Dendritic cell treated with granulocyte-macrophage colony-stimulating factor and Interleukin-4, amounts not matched to agents 40 ng/mL and 50 ng/mL, for 4 days (primary cell): ENCODE measurements at regions of chr2 and their contacts with region 1.

Region 1: DNA sequence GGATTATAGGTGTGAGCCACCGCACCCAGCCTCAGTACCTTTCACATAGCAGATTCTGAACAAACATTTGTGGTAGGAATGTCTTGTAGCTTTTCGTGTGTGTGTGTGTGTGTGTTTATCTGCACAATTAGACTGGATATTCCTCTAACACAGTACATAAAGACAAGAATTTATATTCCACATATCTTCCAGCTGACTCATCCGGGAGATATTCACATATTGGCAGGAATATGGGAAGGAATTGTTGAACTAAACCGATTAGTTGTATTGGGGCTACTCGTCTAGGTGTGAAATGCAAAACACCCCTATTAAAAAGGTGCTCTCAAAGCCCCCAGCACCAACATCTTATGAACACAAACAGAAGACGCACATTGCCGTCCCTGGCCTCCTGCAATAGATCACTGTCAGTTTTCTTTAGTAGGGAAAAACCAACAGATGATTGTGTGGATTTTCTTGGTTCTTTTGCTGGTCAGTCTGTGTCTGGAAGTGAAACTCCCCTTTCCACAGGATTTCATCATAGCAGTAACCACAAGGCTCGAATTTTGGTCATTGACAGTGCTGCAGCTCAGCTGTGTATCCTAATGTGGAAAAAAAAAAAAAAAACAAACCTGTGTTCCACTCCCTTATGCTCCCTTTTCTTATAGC is 208.5 kb upstream of the ACVR2A start:
- H3K4me3 Mint-ChIP-seq: peak overlapping the region; percentile 14
- H3K27ac Mint-ChIP-seq: peak overlapping the region; percentile 71
- H3K4me1 Mint-ChIP-seq: peaks cover 14% of the 10 kb centered on the region
- H3K27me3 Mint-ChIP-seq: no peaks in the 10 kb centered on the region

Region 2: DNA sequence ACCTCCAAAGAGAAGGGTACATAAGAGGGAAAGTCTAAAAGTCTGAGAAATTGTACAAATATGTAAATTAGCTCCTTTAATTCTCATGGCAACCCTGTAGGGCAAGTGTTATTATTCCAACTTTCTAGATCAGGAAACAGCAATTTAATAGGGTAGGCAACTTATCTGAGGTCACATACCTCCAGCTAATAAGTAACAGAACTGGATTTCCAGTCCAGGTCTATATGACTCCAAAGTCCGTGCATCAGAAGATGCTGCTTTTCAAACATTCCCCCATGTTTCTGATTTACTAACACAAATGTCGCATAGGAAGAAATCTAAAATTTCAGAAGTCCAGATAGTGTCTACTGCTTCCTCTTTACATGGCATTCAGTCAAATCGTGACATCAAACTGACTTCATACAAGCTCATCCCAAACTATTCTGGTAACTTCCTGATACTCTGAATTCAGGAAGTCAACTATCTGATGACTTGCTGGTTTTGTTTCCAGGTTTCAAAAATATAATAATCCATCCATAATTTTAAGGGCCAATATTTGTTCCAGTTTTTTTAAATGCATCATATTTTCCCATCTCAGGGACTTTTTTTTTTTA is 210.8 kb before region 1 on chr2:
- intact Hi-C with region 1: loop called (anchors 10 kb)
- H3K4me3 Mint-ChIP-seq: no peak overlapping the region
- H3K27ac Mint-ChIP-seq: peak overlapping the region; percentile 41
- H3K4me1 Mint-ChIP-seq: peaks cover 19% of the 10 kb centered on the region
- H3K27me3 Mint-ChIP-seq: no peaks in the 10 kb centered on the region

Region 3: GRCh38 chr2:147689220-147689909 is 53.0 kb after region 1 on chr2:
- intact Hi-C with region 1: loop called (anchors 2 kb)
- H3K4me3 Mint-ChIP-seq: no peak overlapping the region
- H3K27ac Mint-ChIP-seq: peak overlapping the region; percentile 82
- H3K4me1 Mint-ChIP-seq: peaks cover 45% of the 10 kb centered on the region
- H3K27me3 Mint-ChIP-seq: no peaks in the 10 kb centered on the region

Region 4: GRCh38 chr2:147800316-147800715 is 164.0 kb after region 1 on chr2:
- intact Hi-C with region 1: no loop called
- H3K4me3 Mint-ChIP-seq: no peak overlapping the region
- H3K27ac Mint-ChIP-seq: no peak overlapping the region
- H3K4me1 Mint-ChIP-seq: no peaks in the 10 kb centered on the region
- H3K27me3 Mint-ChIP-seq: peaks cover 1% of the 10 kb centered on the region

Region 5: GRCh38 chr2:147843864-147844696 is 207.7 kb after region 1 on chr2:
- intact Hi-C with region 1: loop called (anchors 5 kb)
- H3K4me3 Mint-ChIP-seq: peak overlapping the region; percentile 98
- H3K27ac Mint-ChIP-seq: peak overlapping the region; percentile 99
- H3K4me1 Mint-ChIP-seq: peaks cover 36% of the 10 kb centered on the region
- H3K27me3 Mint-ChIP-seq: peaks cover 27% of the 10 kb centered on the region

Region 6: GRCh38 chr2:147910990-147911473 is 274.7 kb after region 1 on chr2:
- intact Hi-C with region 1: loop called (anchors 10 kb)
- H3K4me3 Mint-ChIP-seq: no peak overlapping the region
- H3K27ac Mint-ChIP-seq: no peak overlapping the region
- H3K4me1 Mint-ChIP-seq: peaks cover 13% of the 10 kb centered on the region
- H3K27me3 Mint-ChIP-seq: no peaks in the 10 kb centered on the region